Activated naive CD4-positive, alpha-beta T cell treated with anti-CD3 and anti-CD28 coated beads for 36 hours (primary cell): ENCODE measurements at regions of chr20 and their contacts with region 1.

Region 1: DNA sequence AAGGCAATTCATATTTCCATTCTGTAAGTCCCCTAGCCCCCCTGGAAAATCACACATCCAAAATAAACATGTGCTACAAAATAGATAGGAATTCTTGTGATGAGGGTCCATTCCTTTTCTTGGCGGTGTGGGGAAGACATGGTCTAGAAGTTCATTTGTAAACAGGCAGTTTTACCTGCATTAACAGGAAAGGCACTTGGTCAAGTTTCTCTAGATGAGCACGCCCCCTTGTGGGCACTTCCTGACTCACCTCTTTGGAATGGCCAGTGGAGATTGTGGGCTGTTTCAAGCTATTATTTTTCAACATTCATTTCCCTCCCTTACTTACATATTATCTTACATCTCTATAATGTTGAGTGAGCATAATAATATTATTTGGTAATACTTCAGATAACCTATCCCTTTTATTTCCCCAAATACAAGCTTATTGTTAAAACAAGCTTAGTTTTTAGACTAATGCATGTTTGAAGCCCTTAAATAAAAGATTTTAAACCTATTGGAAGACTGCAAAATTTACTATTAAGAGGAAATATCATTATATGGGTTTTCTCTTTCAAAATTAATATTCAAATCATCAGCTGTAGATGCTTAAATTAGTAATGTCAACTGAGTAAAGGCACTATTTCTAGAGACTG is 92.1 kb downstream of the TASP1 start:
- DNase-seq: peak; percentile 86
- H3K4me3 Mint-ChIP-seq: no peak overlapping the region
- H3K27ac Mint-ChIP-seq: no peak overlapping the region
- H3K4me1 Mint-ChIP-seq: no peaks in the 10 kb centered on the region
- H3K27me3 Mint-ChIP-seq: no peaks in the 10 kb centered on the region

Region 2: GRCh38 chr20:12925214-12925755 is 621.3 kb before region 1 on chr20:
- CTCF ChIA-PET with region 1: interaction called, 7 read pairs
- intact Hi-C with region 1: loop called (anchors 1 kb)
- DNase-seq: peak; percentile 48
- H3K4me3 Mint-ChIP-seq: no peak overlapping the region
- H3K27ac Mint-ChIP-seq: no peak overlapping the region
- H3K4me1 Mint-ChIP-seq: no peaks in the 10 kb centered on the region
- H3K27me3 Mint-ChIP-seq: peaks cover 10% of the 10 kb centered on the region

Region 3: DNA sequence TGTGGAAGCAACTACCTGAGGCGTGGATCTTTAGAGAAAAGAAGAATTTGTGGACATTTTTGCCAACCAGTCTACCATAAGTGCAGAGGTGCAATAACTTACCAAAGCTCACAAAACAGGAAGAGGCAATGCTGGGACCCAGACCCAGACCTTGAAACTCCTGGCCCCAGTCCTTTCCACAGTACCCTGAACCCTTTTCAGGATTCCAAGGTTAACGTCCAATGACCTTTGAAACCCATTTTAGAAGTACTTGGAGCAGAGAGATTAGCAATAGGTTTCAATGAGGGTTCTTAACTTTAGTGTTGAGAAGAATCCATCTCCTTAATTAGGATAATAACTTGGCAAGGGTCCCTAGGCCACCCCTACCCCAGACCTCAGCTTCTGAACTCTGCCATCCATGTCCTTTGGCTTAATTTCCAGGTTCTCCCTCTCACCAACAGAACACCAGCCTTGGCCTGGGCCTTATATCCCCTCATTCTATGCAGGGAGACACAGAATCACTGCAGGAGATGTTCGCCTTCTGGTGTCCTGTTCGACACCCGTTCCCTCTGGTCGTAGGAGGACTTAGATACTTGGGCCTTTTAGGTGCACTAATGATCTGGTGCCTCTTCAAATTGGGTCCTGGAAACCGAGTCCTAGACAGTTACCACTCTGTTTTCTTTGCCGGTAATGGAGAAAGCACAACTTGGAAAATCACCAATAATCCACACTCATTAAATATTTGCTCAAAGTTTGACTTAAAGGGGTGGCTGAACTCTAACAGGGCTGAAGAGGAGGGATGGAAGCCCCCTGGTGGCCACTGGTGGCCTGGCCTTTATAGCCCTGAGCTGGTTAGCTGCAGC is 284.9 kb before region 1 on chr20:
- CTCF ChIA-PET with region 1: interaction called, 5 read pairs
- intact Hi-C with region 1: loop called (anchors 2 kb)
- DNase-seq: peak; percentile 74
- H3K4me3 Mint-ChIP-seq: no peak overlapping the region
- H3K27ac Mint-ChIP-seq: no peak overlapping the region
- H3K4me1 Mint-ChIP-seq: peaks cover 10% of the 10 kb centered on the region
- H3K27me3 Mint-ChIP-seq: no peaks in the 10 kb centered on the region

Region 4: DNA sequence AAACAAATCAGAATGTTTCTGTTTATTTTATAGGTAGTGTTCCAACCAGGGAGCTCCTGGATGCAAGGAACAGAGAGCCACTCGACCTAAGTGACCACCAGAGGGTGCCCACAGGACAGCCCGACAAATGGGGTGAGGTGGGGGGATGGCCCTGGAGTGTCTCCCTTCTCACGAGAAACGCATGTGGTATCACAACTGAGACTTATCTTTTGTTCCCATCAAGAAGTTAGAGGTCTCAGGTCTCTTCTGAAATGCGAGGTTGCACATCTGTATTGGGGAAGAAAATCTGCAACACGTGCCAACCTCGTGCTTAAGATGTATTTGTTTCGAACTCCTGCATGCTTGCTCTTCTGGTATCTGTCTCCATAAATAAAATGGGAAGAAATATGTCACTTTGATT is 221.6 kb before region 1 on chr20:
- CTCF ChIA-PET with region 1: interaction called, 3 read pairs
- intact Hi-C with region 1: loop called (anchors 2 kb)
- DNase-seq: no peak
- H3K4me3 Mint-ChIP-seq: no peak overlapping the region
- H3K27ac Mint-ChIP-seq: no peak overlapping the region
- H3K4me1 Mint-ChIP-seq: peaks cover 9% of the 10 kb centered on the region
- H3K27me3 Mint-ChIP-seq: peaks cover 17% of the 10 kb centered on the region

Region 5: DNA sequence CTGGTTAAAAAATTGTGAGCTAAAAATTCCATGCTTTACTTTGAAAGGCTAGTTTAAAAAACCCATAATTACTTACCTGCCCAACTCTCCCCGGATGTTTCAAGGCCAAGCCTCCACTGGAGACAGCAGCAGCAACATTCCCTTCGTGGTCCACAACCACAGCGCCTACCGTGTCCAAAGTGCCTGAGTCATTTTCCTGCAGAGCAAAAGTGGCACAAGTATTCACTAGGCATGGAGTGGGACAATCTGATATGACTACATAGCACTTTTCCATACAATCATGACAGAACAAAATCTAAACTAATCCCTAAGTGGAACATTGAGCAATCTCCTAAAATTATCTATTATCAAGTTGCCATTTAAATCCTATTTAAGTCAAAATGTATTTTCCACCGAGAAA is 12.7 kb before region 1 on chr20:
- CTCF ChIA-PET with region 1: interaction called, 40 read pairs
- intact Hi-C with region 1: no loop called
- DNase-seq: no peak
- H3K4me3 Mint-ChIP-seq: no peak overlapping the region
- H3K27ac Mint-ChIP-seq: no peak overlapping the region
- H3K4me1 Mint-ChIP-seq: no peaks in the 10 kb centered on the region
- H3K27me3 Mint-ChIP-seq: no peaks in the 10 kb centered on the region

Region 6: DNA sequence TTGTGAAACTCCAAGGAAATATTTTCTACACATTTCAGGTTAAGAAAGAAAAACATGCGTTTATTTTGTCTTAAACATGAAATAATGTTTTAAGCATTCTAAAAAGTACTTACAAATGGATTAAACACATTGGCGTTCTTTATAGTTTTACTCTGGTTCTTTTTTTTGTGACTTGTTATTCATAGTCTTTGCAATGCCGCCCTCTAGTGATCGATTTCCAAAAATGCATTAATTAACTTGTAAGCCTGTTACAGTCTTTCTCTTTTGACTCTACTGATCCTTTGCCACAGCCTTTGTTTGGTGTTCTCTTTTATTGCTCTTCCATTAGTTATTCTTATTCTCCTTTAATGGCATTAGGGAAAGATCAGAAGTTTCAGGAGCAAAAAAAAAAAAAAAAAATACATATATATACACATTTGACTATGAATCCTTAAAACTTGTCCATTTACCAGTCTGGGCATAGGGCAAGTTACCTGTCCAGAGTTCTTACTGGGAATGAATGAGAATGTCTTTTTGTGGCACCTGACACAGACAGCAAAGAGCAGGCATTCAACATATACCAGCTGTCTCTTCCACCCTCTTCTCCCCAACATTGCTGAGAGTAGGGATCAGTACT is 508.6 kb after region 1 on chr20:
- CTCF ChIA-PET with region 1: no interaction called
- intact Hi-C with region 1: loop called (anchors 10 kb)
- DNase-seq: peak; percentile 23
- H3K4me3 Mint-ChIP-seq: no peak overlapping the region
- H3K27ac Mint-ChIP-seq: no peak overlapping the region
- H3K4me1 Mint-ChIP-seq: no peaks in the 10 kb centered on the region
- H3K27me3 Mint-ChIP-seq: peaks cover 2% of the 10 kb centered on the region